Naive thymus-derived CD8-positive, alpha-beta T cell (primary cell): ENCODE measurements at regions of chr16 and their contacts with region 1.

Region 1: GRCh38 chr16:2968738-2969544 is at the start of gene PAQR4:
- DNase-seq: peak; percentile 52 to 73 (median 69)
- ATAC-seq: peak; percentile 69 to 71
- H3K4me3 Mint-ChIP-seq: peak within 1 kb of the TSS; percentile 65 to 83 (median 74)
- H3K27ac Mint-ChIP-seq: peak within 1 kb of the TSS in 1 of 10 donors; percentile 15
- H3K4me1 Mint-ChIP-seq: peaks cover 12 to 32% (median 26%) of the 10 kb centered on the region in 4 donors
- H3K27me3 Mint-ChIP-seq: peaks cover 3 to 46% (median 27%) of the 10 kb centered on the region in 5 donors
- polyA plus RNA-seq, gene PAQR4: 0.28 to 0.79 TPM in 2 of 3 donors, not detected in the other

Region 2: DNA sequence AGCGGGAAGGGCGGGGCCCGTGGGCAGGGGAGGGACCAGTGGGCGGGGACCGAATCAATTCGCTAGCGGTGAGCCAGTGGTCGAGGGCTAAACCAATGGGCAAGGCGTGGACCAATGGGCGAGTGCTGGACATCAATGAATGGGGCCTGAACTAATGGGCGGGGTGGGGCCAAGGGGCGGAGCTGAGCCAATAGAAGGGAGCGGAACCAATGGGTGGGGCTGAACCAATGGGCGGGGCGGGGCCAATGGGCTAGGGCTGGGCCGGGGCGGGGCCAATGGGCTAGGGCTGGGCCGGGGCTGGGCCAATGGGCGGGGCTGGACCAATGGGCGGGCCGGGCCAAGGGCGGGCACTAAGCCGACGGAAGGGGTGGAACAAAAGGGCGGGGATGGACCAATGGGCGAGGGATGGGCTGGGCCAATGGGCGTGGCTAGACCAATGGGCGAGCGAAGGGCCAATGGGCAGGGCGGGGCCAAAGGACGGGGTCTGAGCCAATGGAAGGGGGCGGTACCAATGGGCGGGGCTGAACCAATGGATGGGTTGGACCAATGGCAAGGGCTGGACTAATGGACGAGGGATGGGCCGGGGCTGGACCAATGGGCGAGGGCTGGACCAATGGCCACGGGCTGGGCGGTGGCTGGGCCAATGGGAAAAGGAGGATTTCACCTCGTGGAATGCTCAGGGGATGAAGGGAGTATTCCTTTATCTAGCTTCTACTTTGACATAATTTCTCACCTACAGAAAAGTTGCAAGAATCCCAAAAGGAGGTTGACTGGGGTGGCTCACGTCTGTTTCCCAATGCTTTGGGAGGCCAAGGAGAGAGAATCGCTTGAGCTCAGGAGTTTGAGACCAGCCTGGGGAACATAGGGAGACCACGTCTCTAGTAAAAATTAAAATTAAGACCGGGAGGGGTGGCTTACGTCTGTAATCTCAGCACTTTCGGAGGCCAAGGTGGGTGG is 63.2 kb before region 1 on chr16:
- POLR2A ChIA-PET with region 1: no interaction called
- DNase-seq: peak; percentile 77 to 90 (median 83)
- ATAC-seq: peak; percentile 61 to 80
- H3K4me3 Mint-ChIP-seq: peak overlapping the region; percentile 87 to 94 (median 92)
- H3K27ac Mint-ChIP-seq: peak overlapping the region in 8 of 10 donors; percentile 70 to 90 (median 80)
- H3K4me1 Mint-ChIP-seq: peaks cover 16 to 42% (median 31%) of the 10 kb centered on the region in 4 donors
- H3K27me3 Mint-ChIP-seq: no peaks in the 10 kb centered on the region

Region 3: GRCh38 chr16:2980227-2981086 is 11.5 kb after region 1 on chr16 and contains the start of gene PKMYT1:
- POLR2A ChIA-PET with region 1: interaction called, 14 read pairs
- DNase-seq: peak; percentile 89 to 99 (median 95)
- ATAC-seq: peak; percentile 91 to 96
- H3K4me3 Mint-ChIP-seq: peak within 1 kb of the TSS; percentile 61 to 87 (median 80)
- H3K27ac Mint-ChIP-seq: peak within 1 kb of the TSS; percentile 44 to 87 (median 82)
- H3K4me1 Mint-ChIP-seq: peaks cover 0 to 25% (median 15%) of the 10 kb centered on the region in 4 donors
- H3K27me3 Mint-ChIP-seq: peaks cover 0 to 7% (median 0%) of the 10 kb centered on the region in 5 donors
- polyA plus RNA-seq, gene PKMYT1: 0.37 TPM in 1 of 3 donors, not detected in the others